OCI-LY7 (cell line): ENCODE measurements at regions of chr6 and their contacts with region 1.

Region 1: GRCh38 chr6:32971581-32972352 is 3.4 kb downstream of the BRD2 start:
- DNase-seq: peak; percentile 100
- H3K4me3 ChIP-seq: peak overlapping the region; percentile 93
- H3K27ac ChIP-seq: peak overlapping the region; percentile 99
- H3K4me1 ChIP-seq: peaks cover 27% of the 10 kb centered on the region
- CTCF ChIP-seq: no peak

Region 2: GRCh38 chr6:32885698-32886286 is 86.0 kb before region 1 on chr6:
- CTCF ChIA-PET with region 1: no interaction called
- POLR2A ChIA-PET with region 1: interaction called, 5 read pairs
- intact Hi-C with region 1: loop called (anchors 1 kb)
- DNase-seq: peak; percentile 86
- H3K4me3 ChIP-seq: no peak overlapping the region
- H3K27ac ChIP-seq: no peak overlapping the region
- H3K4me1 ChIP-seq: peaks cover 19% of the 10 kb centered on the region
- CTCF ChIP-seq: peak; percentile 86

Region 3: DNA sequence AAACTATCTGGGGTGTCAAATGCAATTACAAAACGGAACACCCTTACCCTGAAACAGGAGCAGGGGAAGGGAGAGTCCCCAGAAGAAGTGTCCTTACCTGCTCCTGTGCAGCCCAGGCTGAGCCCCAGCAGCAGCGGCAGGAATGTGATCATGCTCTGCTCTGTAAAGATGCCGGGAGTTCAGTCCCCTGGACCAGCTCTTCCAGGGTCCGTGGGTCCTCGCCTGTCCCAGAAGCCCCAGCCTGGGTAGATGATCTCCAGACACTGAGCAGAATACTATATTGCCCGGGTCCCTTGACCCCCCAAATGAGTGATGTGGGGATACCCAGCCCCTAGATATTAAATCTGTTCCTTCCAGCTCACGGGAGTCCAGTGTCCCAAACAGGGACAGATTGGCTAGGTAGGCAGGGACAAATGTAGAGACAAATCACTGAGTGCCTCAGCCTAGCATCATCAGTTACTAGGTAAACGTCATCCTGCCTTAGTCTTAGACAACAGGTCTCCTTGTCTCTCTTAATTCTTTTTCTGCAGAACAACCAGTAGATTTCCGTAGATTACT is 31.0 kb before region 1 on chr6 and contains the start of gene HLA-DMB:
- CTCF ChIA-PET with region 1: interaction called, 6 read pairs
- POLR2A ChIA-PET with region 1: interaction called, 91 read pairs
- intact Hi-C with region 1: loop called (anchors 1 kb)
- DNase-seq: peak; percentile 91
- H3K4me3 ChIP-seq: peak within 1 kb of the TSS; percentile 91
- H3K27ac ChIP-seq: peak within 1 kb of the TSS; percentile 99
- H3K4me1 ChIP-seq: peaks cover 68% of the 10 kb centered on the region
- CTCF ChIP-seq: no peak
- total RNA-seq, gene HLA-DMB: 85.1 and 98.0 TPM in 2 replicates

Region 4: DNA sequence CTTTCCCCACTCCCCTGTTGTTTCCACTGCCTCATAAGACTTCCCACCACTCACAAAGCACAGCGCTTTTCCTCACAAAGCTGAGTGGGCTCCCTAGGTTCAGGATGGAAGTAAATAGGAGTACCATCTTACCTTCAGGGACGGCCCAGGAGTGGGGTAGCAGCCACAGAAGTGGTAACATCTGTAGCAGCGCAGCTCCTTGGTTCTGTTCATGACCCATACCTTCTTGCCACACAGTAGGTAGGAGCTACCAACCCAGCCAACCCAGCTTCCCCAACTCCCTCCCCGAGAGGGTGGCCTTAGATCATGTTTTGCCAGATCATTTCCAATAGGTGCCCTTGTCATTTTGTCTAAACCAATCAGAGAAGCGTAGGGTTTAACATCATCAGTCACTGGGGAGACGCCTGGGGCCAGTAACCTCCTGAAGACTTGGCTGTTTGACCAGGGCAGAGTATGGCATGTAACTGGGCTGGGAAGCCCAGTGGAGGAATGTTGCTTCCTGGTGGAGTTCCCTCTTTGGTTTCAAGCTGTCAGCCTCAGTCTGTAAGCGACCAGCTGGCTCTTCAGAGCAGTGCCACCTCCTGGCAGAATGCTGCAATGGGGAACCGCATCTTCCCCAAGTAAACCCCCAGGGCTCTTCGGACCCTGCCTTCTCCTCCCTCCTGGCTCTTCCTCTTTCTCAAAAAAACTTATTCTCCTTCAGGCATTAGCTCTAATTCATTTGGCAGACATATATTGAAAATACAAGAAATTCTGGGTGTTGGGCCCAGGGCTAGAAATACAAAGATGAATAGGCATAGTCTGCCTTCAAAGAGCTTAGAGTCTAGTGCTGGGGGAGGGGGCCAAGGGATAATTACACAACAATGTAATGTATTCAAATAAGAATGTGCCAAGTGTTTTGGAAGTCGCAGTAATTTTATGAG is 18.7 kb before region 1 on chr6 and contains the start of gene HLA-DMA:
- CTCF ChIA-PET with region 1: interaction called, 23 read pairs
- POLR2A ChIA-PET with region 1: interaction called, 203 read pairs
- intact Hi-C with region 1: loop called (anchors 1 kb)
- DNase-seq: peak; percentile 95
- H3K4me3 ChIP-seq: peak within 1 kb of the TSS; percentile 75
- H3K27ac ChIP-seq: peak within 1 kb of the TSS; percentile 74
- H3K4me1 ChIP-seq: peaks cover 72% of the 10 kb centered on the region
- CTCF ChIP-seq: peak; percentile 92
- total RNA-seq, gene HLA-DMA: 175 and 207 TPM in 2 replicates

Region 5: GRCh38 chr6:33029328-33030184 is 57.8 kb after region 1 on chr6:
- CTCF ChIA-PET with region 1: interaction called, 3 read pairs
- POLR2A ChIA-PET with region 1: interaction called, 18 read pairs
- intact Hi-C with region 1: no loop called
- DNase-seq: peak; percentile 89
- H3K4me3 ChIP-seq: peak overlapping the region; percentile 52
- H3K27ac ChIP-seq: peak overlapping the region; percentile 84
- H3K4me1 ChIP-seq: peaks cover 49% of the 10 kb centered on the region
- CTCF ChIP-seq: no peak

Region 6: GRCh38 chr6:33172688-33173534 is 201.1 kb after region 1 on chr6:
- CTCF ChIA-PET with region 1: no interaction called
- POLR2A ChIA-PET with region 1: no interaction called
- intact Hi-C with region 1: no loop called
- DNase-seq: peak; percentile 35
- H3K4me3 ChIP-seq: no peak overlapping the region
- H3K27ac ChIP-seq: no peak overlapping the region
- H3K4me1 ChIP-seq: peaks cover 4% of the 10 kb centered on the region
- CTCF ChIP-seq: peak; percentile 79

Region 7: GRCh38 chr6:33252759-33253158 is 281.0 kb after region 1 on chr6:
- CTCF ChIA-PET with region 1: no interaction called
- POLR2A ChIA-PET with region 1: no interaction called
- intact Hi-C with region 1: no loop called
- DNase-seq: no peak
- H3K4me3 ChIP-seq: no peak overlapping the region
- H3K27ac ChIP-seq: no peak overlapping the region
- H3K4me1 ChIP-seq: peaks cover 22% of the 10 kb centered on the region
- CTCF ChIP-seq: no peak